HAP-1 (cell line): ENCODE measurements at regions of chrX and their contacts with region 1.

Region 1: DNA sequence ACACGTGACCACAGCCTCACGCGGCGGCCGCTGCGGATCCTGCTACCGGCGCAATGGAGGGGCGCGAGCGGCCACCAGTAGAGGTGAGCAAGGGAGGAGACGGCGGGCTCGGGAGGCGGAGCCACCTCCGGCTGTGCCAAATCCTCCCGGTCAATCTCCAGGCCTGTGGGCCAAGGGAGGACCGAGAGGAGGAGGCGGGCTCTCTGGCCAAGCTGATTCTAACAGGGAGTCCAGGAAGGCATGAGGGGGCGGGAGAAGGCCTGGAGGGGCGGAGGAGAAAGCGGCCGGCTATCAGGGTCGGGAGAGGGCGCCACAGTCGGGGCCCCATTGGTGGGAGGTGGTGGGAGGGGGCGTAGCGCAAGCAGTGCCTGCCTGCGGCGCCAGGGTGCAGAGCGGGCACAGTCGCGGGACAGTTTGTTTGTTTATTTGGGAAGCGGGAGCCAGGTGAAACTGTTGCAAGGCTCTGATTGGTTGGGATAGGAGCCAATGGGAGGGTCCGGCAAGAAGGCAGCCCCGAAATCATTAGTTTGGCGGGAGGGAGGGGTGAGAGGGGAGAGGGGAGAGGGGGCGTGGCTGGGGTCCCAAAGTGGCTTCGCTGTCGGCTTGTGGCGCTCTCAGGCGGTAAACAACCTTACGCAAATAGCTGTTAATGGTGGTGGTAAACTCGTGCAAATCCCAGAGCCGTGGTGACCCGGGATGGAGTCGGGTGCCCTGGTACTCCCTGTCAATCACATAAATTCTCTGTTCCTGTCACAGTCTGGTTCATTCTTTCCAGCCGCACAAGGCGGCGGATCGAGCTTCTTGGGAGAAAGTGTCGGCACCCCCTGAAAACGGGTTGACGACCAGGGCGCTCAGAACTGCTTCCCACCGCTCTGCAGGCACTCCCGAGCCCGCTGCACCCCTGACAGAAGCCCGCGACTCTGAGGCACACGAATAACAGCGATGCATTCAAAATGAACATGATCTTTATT is at the start of gene IRS4:
- DNase-seq: peak; percentile 70 to 81
- H3K4me3 ChIP-seq: peak within 1 kb of the TSS; percentile 38
- H3K4me1 ChIP-seq: no peaks in the 10 kb centered on the region
- H3K27me3 ChIP-seq: peaks cover 79% of the 10 kb centered on the region

Region 2: DNA sequence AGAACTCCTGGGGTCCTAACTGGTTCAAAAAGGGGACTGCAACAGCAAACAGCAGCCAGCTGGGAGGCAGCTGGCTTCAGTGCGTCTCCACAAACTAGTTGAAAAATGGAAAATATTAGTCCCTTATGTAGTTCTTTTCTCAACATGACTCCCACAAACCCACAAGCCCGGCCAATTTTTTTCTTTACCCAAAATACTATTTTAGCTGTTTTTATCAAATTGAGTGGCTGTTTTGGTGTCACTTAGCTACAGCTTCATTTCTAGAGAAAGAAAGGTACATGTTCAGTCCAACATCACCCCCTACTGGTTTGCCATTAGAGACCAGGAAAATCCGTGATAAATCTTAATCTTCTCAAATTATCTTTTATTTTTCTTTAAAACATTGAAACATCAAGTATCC is 647.9 kb after region 1 on chrX:
- in situ Hi-C with region 1: loop called (anchors 25 kb)
- DNase-seq: peak; percentile 44 to 51
- H3K4me3 ChIP-seq: no peak overlapping the region
- H3K4me1 ChIP-seq: no peaks in the 10 kb centered on the region
- H3K27me3 ChIP-seq: peaks cover 3% of the 10 kb centered on the region